Activated CD4-positive, alpha-beta T cell treated with anti-CD3 and anti-CD28 coated beads for 36 hours (primary cell): ENCODE measurements at regions of chr16 and their contacts with region 1.

Region 1: DNA sequence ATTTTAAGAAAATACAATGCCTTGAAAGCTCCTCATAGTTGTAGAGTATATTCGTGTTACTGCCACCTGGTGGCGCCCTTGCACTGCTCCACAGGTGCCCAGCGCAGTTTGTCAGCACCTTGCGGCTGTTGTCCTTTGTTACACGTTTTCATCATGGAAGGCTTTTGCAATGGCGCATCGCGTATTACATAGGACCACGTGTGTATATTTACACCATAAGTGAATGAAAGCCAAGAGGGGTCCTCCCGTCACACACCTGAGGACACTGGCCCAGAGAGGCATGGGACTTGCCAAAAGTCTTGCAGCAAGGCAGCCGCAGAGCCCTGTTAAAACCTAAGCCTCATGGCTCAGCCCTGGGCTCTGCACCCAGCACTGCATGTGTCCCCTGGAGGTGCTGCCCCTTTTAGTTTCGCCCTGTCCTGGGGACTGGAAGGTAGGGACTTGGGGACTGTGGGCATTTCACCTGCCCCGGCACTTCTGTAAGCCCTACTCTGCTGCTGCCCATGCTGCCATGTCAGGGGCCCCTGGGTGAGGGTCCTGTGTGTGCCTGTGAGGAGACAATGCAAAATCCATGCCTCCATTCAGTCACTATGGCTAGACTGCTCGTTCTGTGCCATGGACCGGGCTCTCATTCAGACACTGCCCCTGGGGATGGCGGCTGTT is 24.3 kb downstream of the POLR3E start:
- DNase-seq: peak; percentile 86
- ATAC-seq: peak; percentile 89
- H3K4me3 Mint-ChIP-seq: no peak overlapping the region
- H3K27ac Mint-ChIP-seq: peak overlapping the region; percentile 60
- H3K4me1 Mint-ChIP-seq: peaks cover 4% of the 10 kb centered on the region
- H3K27me3 Mint-ChIP-seq: no peaks in the 10 kb centered on the region

Region 2: DNA sequence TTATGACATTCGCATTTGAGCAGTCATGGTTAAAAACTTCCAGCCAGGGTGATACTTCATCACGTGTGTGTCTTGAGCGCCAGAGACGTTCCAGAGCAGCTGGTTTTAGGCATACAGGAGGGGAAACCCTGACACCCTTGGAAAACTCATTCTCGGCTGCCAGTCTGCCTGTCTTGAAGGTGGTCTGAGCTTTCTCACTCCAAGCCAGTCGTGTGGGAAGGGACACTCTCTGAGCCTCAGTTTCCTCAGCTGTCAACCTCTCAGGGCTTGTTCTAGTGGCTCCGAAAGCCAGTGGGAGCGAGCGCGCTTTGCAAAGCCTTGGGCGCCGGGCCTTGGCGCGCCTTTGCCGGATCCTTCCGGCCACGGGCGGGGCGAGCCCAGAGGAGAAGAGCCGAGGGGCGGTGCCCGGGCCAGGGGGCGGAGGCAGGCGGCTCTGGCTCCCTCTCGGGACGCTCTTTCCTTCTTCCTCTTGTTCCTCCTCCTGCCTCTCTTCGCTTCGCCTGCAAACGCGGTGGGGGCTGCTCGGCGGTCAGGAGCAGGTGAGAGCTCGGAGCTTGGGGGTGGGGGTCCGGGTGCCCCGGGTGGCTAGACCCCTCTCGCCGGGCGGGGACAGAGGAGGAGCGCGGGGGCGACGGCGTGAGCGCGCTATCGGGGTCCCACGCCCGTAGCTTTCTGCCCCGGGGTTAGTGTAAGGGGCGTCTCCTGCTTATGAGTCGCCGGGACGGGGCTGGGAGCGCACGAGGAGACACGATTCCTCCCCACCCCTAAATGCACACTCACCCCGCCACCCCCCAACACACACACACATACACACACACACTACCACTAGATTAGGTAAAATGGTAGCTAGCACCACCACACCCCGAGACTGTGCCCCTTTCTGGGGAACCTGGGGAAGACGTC is 1163.0 kb before region 1 on chr16 and contains the start of gene LDAF1:
- CTCF ChIA-PET with region 1: interaction called, 3 read pairs
- POLR2A ChIA-PET with region 1: no interaction called
- intact Hi-C with region 1: loop called in 1 of 2 experiments (anchors 10 kb)
- DNase-seq: peak; percentile 90
- ATAC-seq: peak; percentile 99
- H3K4me3 Mint-ChIP-seq: peak within 1 kb of the TSS; percentile 88
- H3K27ac Mint-ChIP-seq: peak within 1 kb of the TSS; percentile 81
- H3K4me1 Mint-ChIP-seq: peaks cover 20% of the 10 kb centered on the region
- H3K27me3 Mint-ChIP-seq: no peaks in the 10 kb centered on the region
- total RNA-seq, gene LDAF1: 7.2 to 11.7 TPM

Region 3: GRCh38 chr16:21982108-21982507 is 339.4 kb before region 1 on chr16:
- CTCF ChIA-PET with region 1: no interaction called
- POLR2A ChIA-PET with region 1: no interaction called
- intact Hi-C with region 1: no loop called
- DNase-seq: no peak
- ATAC-seq: no peak
- H3K4me3 Mint-ChIP-seq: no peak overlapping the region
- H3K27ac Mint-ChIP-seq: peak overlapping the region; percentile 27
- H3K4me1 Mint-ChIP-seq: no peaks in the 10 kb centered on the region
- H3K27me3 Mint-ChIP-seq: no peaks in the 10 kb centered on the region

Region 4: DNA sequence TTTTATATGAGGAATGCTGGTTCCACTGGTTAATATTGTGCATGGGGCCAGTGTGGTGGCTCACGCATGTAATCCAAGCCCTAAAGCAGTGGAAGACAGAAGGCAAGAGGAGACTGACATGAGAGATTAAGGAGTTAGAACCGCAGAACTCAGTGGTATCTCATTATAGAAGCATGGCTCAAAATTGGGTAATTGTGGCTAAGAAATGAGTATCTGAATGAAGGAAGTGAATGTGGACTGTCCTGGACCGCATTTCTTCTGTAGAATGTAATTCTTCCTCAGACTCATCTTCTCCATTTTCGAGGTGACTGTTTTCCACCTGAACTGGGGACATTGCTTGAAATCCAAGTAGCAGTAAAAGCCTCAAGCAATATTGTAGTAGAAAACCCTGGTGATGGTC is 95.5 kb after region 1 on chr16:
- CTCF ChIA-PET with region 1: no interaction called
- POLR2A ChIA-PET with region 1: interaction called, 3 read pairs
- intact Hi-C with region 1: loop called in 1 of 2 experiments (anchors 5 kb)
- DNase-seq: no peak
- ATAC-seq: no peak
- H3K4me3 Mint-ChIP-seq: no peak overlapping the region
- H3K27ac Mint-ChIP-seq: no peak overlapping the region
- H3K4me1 Mint-ChIP-seq: no peaks in the 10 kb centered on the region
- H3K27me3 Mint-ChIP-seq: no peaks in the 10 kb centered on the region

Region 5: DNA sequence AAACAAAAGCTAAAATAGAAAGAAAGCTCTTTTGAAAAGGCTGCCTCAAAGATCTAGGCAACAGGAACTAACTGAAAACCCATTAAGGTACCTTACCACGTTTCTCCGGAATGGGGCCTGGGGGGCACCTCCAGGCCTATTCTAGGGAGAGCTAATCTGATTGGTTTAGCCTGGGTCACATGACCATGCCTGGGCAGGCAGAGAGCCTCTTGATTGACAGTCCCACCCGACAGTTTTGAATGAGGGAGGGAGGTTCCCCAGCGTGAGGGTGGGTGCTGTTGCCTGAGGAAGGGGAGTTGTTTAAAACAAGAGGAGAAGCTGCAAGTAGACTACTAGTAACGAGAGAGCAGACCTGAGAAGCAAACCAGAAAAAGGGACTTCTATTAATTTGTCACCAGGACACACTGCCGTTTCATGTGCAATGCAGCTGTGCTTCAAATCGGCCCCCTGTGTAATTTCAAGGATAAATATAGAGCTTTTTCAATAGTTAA is 349.1 kb after region 1 on chr16:
- CTCF ChIA-PET with region 1: no interaction called
- POLR2A ChIA-PET with region 1: no interaction called
- intact Hi-C with region 1: loop called in 1 of 2 experiments (anchors 10 kb)
- DNase-seq: peak; percentile 41
- ATAC-seq: peak; percentile 51
- H3K4me3 Mint-ChIP-seq: no peak overlapping the region
- H3K27ac Mint-ChIP-seq: no peak overlapping the region
- H3K4me1 Mint-ChIP-seq: no peaks in the 10 kb centered on the region
- H3K27me3 Mint-ChIP-seq: no peaks in the 10 kb centered on the region